ENCODE measurements at regions of chr12 and their contacts with region 1.

Region 1: DNA sequence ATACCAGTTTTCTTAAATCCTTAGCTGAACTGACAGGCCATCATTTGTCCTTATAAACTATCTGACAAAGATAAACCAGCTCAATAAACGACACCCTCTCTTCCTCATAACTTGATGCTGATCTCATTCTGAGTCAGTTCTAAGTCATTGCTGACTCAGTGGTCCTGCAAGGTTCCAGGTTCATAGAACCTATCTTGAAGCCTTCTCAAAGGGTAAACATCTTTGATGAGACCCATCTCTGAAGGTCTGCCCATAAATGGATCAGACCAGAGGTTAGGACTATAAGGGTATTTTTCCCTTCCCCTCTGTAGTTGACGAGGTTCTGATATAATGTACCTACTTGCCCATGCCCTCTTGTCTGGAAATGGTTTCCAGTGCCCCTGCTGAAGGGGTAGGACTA is 11.9 kb downstream of the NAA25 start:
- DNase-seq: no peak
- H3K4me3 ChIP-seq: no peak overlapping the region
- H3K27ac ChIP-seq: peak overlapping the region in 1 of 2 experiments; percentile 57
- H3K4me1 ChIP-seq: peaks cover 0 to 15% (median 5%) of the 10 kb centered on the region in 4 experiments
- H3K27me3 ChIP-seq: no peaks in the 10 kb centered on the region

Region 2: DNA sequence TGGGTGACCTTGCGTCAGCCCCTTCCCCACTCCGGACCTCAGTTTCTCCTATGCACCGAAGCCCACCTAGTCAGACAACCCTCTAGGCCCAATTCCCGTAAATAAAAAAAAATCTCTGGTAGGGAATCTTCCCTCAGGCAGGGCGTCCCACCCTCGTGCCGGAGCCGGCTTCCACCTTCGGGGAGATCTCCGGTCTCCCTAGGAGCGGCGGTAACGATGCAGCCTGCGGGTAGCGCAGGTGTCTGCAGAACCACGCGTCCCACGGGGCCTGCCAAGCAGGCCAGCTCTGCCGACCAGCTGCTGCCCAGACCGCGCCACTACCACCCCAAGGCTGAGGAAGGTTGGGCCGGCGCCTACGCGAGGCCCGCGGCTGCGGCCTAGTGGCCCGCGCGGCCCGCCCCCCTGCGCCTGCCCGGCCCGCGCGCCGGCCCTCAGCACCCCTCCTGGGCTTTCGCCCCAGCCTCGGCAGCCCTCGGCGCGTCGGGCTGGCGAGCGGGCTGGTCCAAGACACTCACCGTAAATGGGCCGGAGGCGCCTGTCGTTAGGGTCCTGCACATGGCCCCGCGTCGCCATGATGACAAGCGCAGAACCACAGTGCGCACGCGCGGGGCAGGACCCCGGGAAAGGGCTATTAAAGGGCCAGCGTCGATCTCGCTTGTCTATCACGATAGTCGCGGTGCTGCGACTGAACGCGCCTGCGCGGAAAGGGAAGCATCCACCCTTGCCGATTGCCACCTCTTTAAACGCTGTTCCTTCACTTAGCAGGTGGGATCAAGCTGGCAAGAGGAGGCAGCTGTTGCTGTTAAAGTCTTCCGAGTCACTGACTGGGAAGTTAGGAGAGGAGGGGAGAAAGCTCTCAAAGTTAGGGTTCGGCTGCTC is 11.8 kb after region 1 on chr12 and contains the start of gene NAA25:
- CTCF ChIA-PET with region 1: interaction called, 18 read pairs
- POLR2A ChIA-PET with region 1: no interaction called
- DNase-seq: peak; percentile 83 to 89 (median 86)
- H3K4me3 ChIP-seq: peak within 1 kb of the TSS; percentile 81 to 100 (median 90)
- H3K27ac ChIP-seq: peak within 1 kb of the TSS; percentile 77 to 95
- H3K4me1 ChIP-seq: peaks cover 9 to 36% (median 26%) of the 10 kb centered on the region in 4 experiments
- H3K27me3 ChIP-seq: no peaks in the 10 kb centered on the region

Region 3: GRCh38 chr12:112422531-112422930 is 325.9 kb after region 1 on chr12:
- CTCF ChIA-PET with region 1: no interaction called
- POLR2A ChIA-PET with region 1: no interaction called
- DNase-seq: no peak
- H3K4me3 ChIP-seq: no peak overlapping the region
- H3K27ac ChIP-seq: no peak overlapping the region
- H3K4me1 ChIP-seq: peaks cover 6 to 24% (median 16%) of the 10 kb centered on the region in 4 experiments
- H3K27me3 ChIP-seq: no peaks in the 10 kb centered on the region

Region 4: DNA sequence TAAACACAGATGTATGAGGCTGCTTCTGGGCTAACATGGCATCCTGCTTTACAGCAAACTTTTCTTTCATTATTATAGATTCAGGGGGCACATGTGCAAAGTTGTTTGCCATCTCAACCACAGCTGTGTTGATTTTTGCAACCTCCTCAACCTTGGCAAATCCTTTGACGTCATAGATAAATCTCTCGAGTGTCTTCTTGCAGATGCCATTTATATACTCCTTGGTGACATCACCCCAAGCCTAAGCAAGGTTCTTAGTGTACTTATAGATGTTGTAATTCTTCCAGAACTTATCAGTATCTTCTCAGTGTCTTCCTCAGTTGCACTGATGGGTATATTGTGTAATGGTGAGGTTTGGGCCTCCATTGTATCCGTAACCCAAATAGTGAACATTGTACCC is 559.5 kb after region 1 on chr12:
- CTCF ChIA-PET with region 1: no interaction called
- POLR2A ChIA-PET with region 1: no interaction called
- DNase-seq: no peak
- H3K4me3 ChIP-seq: no peak overlapping the region
- H3K27ac ChIP-seq: no peak overlapping the region
- H3K4me1 ChIP-seq: no peaks in the 10 kb centered on the region
- H3K27me3 ChIP-seq: peaks cover 0 to 5% (median 3%) of the 10 kb centered on the region in 5 experiments